ENCODE measurements at regions of chr1 and their contacts with region 1.

Region 1: GRCh38 chr1:37859507-37860345 is at the start of gene MTF1:
- DNase-seq: peak; percentile 90
- ATAC-seq: peak; percentile 99
- H3K4me3 Mint-ChIP-seq: peak within 1 kb of the TSS; percentile 99
- H3K27ac Mint-ChIP-seq: peak within 1 kb of the TSS; percentile 99
- H3K4me1 Mint-ChIP-seq: peaks cover 24% of the 10 kb centered on the region
- H3K27me3 Mint-ChIP-seq: no peaks in the 10 kb centered on the region
- total RNA-seq, gene MTF1: 21.7 to 28.2 TPM

Region 2: DNA sequence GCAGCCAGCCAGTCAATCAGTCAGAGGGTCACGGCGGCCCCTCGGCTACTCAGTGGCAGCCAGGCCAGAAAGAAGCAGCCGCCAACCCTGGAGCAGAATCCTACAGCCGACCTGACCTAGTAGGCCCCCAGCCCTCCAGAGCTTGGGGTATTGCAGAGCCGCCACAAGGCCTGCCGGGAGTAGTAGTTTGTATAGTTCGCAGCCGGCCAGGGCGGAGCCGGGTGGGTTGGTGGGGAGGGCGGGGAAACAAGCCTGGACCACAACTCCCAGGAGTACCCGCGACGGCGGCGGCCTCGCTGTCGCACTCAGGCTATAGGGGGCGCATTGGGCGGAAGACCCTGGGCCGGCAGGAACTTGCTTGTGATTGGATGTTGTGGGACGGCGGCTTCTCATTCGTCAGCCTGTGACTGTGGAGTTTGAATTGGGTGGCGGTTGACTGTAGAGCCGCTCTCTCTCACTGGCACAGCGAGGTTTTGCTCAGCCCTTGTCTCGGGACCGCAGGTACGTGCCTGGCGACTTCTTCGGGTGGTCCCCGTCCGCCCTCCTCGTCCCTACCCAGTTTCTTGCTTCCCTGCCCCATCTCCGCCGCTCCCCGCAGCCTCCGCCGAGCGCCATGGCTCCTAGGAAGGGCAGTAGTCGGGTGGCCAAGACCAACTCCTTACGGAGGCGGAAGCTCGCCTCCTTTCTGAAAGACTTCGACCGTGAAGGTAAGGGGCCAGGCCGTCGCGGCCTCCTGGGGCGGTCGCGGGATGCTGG is 167.5 kb before region 1 on chr1 and contains the start of gene CDCA8:
- POLR2A ChIA-PET with region 1: interaction called, 27 read pairs
- DNase-seq: peak; percentile 97
- ATAC-seq: peak; percentile 86
- H3K4me3 Mint-ChIP-seq: peak within 1 kb of the TSS; percentile 89
- H3K27ac Mint-ChIP-seq: peak within 1 kb of the TSS; percentile 92
- H3K4me1 Mint-ChIP-seq: peaks cover 35% of the 10 kb centered on the region
- H3K27me3 Mint-ChIP-seq: no peaks in the 10 kb centered on the region
- total RNA-seq, gene CDCA8: 64.7 to 67.0 TPM

Region 3: DNA sequence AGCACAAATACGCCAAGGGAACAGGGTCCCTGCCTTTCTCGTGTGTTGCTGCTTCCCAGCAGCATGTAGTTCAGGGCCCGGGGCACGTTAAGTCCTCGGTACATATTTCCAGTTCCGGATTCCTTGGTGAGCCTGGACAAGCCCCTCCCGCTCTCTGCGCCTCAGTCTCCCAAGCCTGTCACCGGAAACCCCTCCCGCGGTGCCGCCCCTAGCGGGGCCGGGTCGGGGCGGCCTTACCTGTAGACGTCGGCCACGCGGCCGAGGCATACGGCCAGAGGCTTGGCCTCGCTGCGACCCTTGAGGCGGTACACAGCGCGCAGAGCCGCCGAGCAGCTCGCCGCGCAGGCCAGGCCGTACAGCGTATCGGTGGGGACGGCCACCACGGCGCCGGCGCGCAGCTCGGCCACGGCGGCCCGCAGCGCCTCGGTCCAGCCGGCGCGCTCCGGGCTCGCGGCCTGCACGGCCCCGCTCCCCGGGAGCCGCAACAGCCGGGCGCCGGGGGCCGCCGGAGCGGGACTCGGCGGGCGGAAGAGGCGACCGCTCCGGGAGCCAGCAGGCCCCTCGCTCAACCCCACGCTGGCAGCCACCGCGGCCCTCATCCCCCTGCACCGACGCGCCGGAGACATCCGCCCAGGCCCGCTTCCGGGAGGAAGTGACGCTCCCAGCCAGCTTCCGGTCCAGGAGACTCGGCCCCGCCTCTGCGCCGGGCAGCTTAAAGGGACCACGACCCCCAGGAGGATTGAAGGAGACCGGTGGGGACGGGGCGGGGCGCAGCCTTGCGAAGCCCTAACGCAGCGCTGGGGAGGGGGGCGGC is 52.0 kb before region 1 on chr1 and contains the starts of genes C1orf122 and YRDC:
- POLR2A ChIA-PET with region 1: interaction called, 34 read pairs
- DNase-seq: peak; percentile 93
- ATAC-seq: peak; percentile 87
- H3K4me3 Mint-ChIP-seq: peak within 1 kb of the TSS; percentile 97
- H3K27ac Mint-ChIP-seq: peak within 1 kb of the TSS; percentile 98
- H3K4me1 Mint-ChIP-seq: peaks cover 24% of the 10 kb centered on the region
- H3K27me3 Mint-ChIP-seq: no peaks in the 10 kb centered on the region
- total RNA-seq, gene C1orf122: 15.4 to 18.0 TPM
- total RNA-seq, gene YRDC: 13.3 to 14.1 TPM

Region 4: GRCh38 chr1:37846647-37847339 is 12.9 kb before region 1 on chr1:
- POLR2A ChIA-PET with region 1: interaction called, 16 read pairs
- DNase-seq: no peak
- ATAC-seq: no peak
- H3K4me3 Mint-ChIP-seq: peak overlapping the region; percentile 87
- H3K27ac Mint-ChIP-seq: peak overlapping the region; percentile 88
- H3K4me1 Mint-ChIP-seq: peaks cover 26% of the 10 kb centered on the region
- H3K27me3 Mint-ChIP-seq: no peaks in the 10 kb centered on the region

Region 5: GRCh38 chr1:37883671-37884070 is 23.9 kb after region 1 on chr1:
- POLR2A ChIA-PET with region 1: no interaction called
- DNase-seq: no peak
- ATAC-seq: no peak
- H3K4me3 Mint-ChIP-seq: no peak overlapping the region
- H3K27ac Mint-ChIP-seq: no peak overlapping the region
- H3K4me1 Mint-ChIP-seq: no peaks in the 10 kb centered on the region
- H3K27me3 Mint-ChIP-seq: no peaks in the 10 kb centered on the region

Measured in activated naive CD8-positive, alpha-beta T cell treated with anti-CD3 and anti-CD28 coated beads, Interleukin-2, amount 10 ng/mL, durations not matched to agents 7 days and 5 days (primary cell).